ENCODE measurements at regions of chr4 and their contacts with region 1.

Region 1: GRCh38 chr4:168815379-168816345 is 194.4 kb downstream of the CBR4 start:
- DNase-seq: peak; percentile 56
- H3K4me3 ChIP-seq: no peak overlapping the region
- H3K27ac ChIP-seq: peak overlapping the region; percentile 83 to 86
- H3K4me1 ChIP-seq: no peaks in the 10 kb centered on the region
- H3K27me3 ChIP-seq: no peaks in the 10 kb centered on the region
- CTCF ChIP-seq: no peak
- POLR2A ChIP-seq: no peak

Region 2: GRCh38 chr4:168598191-168598590 is 217.5 kb before region 1 on chr4:
- intact Hi-C with region 1: no loop called
- DNase-seq: peak; percentile 27
- H3K4me3 ChIP-seq: no peak overlapping the region
- H3K27ac ChIP-seq: no peak overlapping the region
- H3K4me1 ChIP-seq: no peaks in the 10 kb centered on the region
- H3K27me3 ChIP-seq: no peaks in the 10 kb centered on the region
- CTCF ChIP-seq: no peak
- POLR2A ChIP-seq: no peak

Region 3: GRCh38 chr4:168717847-168718246 is 97.8 kb before region 1 on chr4:
- intact Hi-C with region 1: loop called (anchors 2 kb)
- DNase-seq: peak; percentile 22
- H3K4me3 ChIP-seq: no peak overlapping the region
- H3K27ac ChIP-seq: peak overlapping the region; percentile 69 to 71
- H3K4me1 ChIP-seq: no peaks in the 10 kb centered on the region
- H3K27me3 ChIP-seq: no peaks in the 10 kb centered on the region
- CTCF ChIP-seq: no peak
- POLR2A ChIP-seq: no peak

Region 4: GRCh38 chr4:168831919-168832762 is 16.5 kb after region 1 on chr4:
- intact Hi-C with region 1: loop called (anchors 1 kb)
- DNase-seq: peak; percentile 84
- H3K4me3 ChIP-seq: peak overlapping the region; percentile 59 to 80
- H3K27ac ChIP-seq: peak overlapping the region; percentile 92 to 95
- H3K4me1 ChIP-seq: no peaks in the 10 kb centered on the region
- H3K27me3 ChIP-seq: no peaks in the 10 kb centered on the region
- CTCF ChIP-seq: peak in 1 of 4 experiments; percentile 7
- POLR2A ChIP-seq: peak; percentile 94

Region 5: DNA sequence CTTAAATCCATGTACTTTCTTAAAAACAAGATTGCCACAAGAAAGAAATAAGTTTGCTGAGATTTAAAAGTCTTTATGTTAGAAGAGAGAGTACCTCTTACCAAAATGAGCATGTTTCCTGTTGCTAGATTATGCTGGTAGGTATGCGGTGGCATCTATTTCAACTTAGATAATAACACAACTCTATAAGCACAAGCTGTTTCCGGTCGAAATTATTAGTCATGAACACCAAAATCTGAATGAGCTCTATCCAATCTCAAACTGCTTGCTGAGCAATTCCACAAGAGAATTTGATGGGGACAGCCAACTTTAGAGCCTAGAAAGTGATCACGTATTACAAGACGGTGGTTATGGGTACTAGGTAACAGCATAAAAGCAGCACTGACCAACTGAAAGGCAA is 145.1 kb after region 1 on chr4:
- intact Hi-C with region 1: no loop called
- DNase-seq: no peak
- H3K4me3 ChIP-seq: no peak overlapping the region
- H3K27ac ChIP-seq: no peak overlapping the region
- H3K4me1 ChIP-seq: no peaks in the 10 kb centered on the region
- H3K27me3 ChIP-seq: no peaks in the 10 kb centered on the region
- CTCF ChIP-seq: no peak
- POLR2A ChIP-seq: no peak

Region 6: GRCh38 chr4:169341490-169341889 is 525.8 kb after region 1 on chr4:
- intact Hi-C with region 1: no loop called
- DNase-seq: no peak
- H3K4me3 ChIP-seq: no peak overlapping the region
- H3K27ac ChIP-seq: no peak overlapping the region
- H3K4me1 ChIP-seq: no peaks in the 10 kb centered on the region
- H3K27me3 ChIP-seq: no peaks in the 10 kb centered on the region
- CTCF ChIP-seq: no peak
- POLR2A ChIP-seq: no peak

Measured in prostate gland (tissue), 2 donors.